Activated T-helper 1 cell treated with anti-CD3 and anti-CD28 coated beads, Interleukin-12 subunit alpha, Interleukin-12 subunit beta, Interleukin-2, Interleukin-4 antibody, amounts not matched to agents 30 ng/mL and 10 ng/mL and 1 ng/mL, durations not matched to agents 14 hours and 24 hours and 36 hours (primary cell): ENCODE measurements at regions of chr13 and their contacts with region 1.

Region 1: DNA sequence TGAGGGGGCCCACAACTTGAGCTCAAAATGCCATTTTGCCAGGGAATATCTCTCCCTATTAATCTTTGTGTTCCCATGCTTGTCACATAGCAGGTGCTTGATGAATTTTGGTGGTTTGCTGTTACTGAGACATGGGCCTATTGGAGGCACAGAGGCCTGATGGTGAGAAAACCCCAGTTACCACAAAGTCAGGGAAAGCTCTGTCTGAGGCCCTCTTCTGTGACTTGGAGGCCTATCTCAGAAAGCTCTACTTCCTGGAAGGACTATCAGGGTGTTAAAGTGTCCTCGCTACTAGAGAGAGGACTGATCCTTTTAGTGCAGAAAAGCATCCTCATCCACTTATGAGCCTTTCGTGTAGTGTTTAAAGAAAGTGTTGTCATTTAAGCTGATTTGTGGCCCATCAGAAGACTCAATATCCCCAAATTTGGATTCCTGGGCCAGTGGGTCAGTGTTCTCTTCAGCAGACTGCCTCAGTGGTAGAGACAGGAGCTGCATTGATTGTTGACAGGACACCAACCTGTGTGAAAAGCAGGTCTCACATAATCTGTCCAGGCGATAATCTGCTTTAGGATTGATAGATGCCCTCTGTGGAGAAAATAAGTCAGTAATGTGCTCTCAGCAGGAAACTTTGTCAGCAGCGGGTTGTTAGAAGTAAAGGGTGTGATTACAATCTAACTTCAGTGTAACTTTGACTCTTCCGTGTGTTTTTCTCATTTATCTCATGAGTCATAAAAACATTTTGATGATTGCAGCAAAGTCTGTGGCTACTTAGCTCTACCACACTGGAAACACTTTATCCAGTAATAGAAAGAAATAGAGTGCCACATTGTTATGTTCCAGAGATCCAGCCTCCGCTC is 121.0 kb downstream of the AKAP11 start:
- DNase-seq: peak; percentile 45
- H3K4me3 Mint-ChIP-seq: peak overlapping the region; percentile 89
- H3K27ac Mint-ChIP-seq: peak overlapping the region; percentile 100
- H3K4me1 Mint-ChIP-seq: peaks cover 79% of the 10 kb centered on the region
- H3K27me3 Mint-ChIP-seq: no peaks in the 10 kb centered on the region

Region 2: DNA sequence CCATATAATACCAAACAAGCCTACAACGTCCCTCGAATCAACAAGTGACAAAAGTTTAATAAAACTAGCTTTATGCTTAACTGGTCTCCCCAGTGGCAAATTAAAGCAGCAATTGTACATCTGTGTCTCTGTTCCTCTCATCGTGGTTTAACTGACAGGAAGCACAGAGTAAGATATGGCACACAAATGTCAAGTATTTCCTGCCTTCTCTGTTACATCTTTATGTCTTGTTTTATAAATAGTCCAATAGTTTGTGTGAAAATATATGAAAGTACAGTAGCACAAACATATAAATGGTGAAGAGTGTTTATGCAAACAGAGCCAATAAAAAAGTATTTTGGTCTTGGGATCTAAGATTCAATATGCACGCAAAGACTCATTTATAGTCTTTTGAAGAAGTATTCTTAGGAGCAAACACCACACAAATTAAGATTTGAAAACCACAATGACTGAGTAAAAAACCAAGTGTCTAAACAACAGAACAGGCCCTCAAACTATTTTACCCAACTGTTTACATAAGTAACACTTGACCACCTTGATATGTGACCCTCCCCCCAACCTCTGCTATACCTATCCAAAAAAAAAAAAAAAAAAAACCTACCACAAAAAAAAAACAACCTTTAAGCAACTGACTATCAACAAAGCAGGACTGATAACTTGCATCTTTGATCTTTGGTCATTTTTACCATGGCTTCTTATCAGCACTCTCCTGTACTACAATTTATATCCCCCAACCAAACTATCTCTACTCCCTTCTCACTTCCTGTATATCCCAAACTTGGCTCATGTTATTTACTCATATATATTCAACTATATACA is 1387.9 kb before region 1 on chr13:
- intact Hi-C with region 1: loop called (anchors 10 kb)
- DNase-seq: no peak
- H3K4me3 Mint-ChIP-seq: peak overlapping the region; percentile 59
- H3K27ac Mint-ChIP-seq: peak overlapping the region; percentile 88
- H3K4me1 Mint-ChIP-seq: peaks cover 66% of the 10 kb centered on the region
- H3K27me3 Mint-ChIP-seq: no peaks in the 10 kb centered on the region

Region 3: GRCh38 chr13:41916173-41916954 is 476.6 kb before region 1 on chr13:
- intact Hi-C with region 1: loop called (anchors 10 kb)
- DNase-seq: no peak
- H3K4me3 Mint-ChIP-seq: peak overlapping the region; percentile 79
- H3K27ac Mint-ChIP-seq: peak overlapping the region; percentile 96
- H3K4me1 Mint-ChIP-seq: peaks cover 58% of the 10 kb centered on the region
- H3K27me3 Mint-ChIP-seq: no peaks in the 10 kb centered on the region

Region 4: DNA sequence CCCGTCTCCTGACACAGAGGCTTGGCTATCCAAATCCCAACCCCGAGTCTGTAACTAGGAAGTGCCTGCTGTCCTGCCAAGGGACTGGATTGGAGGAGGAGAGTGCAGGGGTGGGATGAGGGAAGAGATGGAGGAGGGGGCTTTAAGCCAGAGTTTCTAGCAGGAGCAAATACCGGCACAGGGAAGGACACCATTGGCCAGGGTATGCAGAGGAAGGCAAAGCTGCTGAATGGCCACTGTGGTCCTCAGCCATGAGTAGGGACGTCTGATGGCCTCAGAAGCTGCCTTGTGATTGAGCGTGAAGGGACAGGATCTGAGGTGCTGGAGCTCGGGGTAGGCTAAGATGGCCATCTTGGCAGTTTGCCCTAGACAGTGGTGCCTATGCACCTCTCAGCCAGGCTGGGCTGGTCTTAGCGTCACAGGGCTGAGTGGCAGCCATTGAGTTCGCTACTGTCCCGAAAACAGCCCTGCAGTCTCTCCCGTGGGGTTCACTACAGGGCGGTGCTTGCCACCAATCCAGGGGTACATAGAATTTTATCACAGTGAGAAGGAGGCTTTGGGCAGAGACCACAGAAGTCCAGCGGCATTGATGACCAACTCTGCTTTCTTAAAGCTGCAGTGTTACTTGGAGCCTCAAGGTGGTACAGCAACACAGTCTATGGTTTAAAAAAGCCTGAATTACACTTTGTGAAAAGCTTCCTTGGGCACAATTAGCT is 59.2 kb before region 1 on chr13:
- intact Hi-C with region 1: loop called (anchors 1 kb)
- DNase-seq: no peak
- H3K4me3 Mint-ChIP-seq: no peak overlapping the region
- H3K27ac Mint-ChIP-seq: peak overlapping the region; percentile 6
- H3K4me1 Mint-ChIP-seq: peaks cover 51% of the 10 kb centered on the region
- H3K27me3 Mint-ChIP-seq: no peaks in the 10 kb centered on the region

Region 5: GRCh38 chr13:42377640-42378382 is 15.1 kb before region 1 on chr13:
- intact Hi-C with region 1: loop called (anchors 1 kb)
- DNase-seq: peak; percentile 68
- H3K4me3 Mint-ChIP-seq: peak overlapping the region; percentile 38
- H3K27ac Mint-ChIP-seq: peak overlapping the region; percentile 89
- H3K4me1 Mint-ChIP-seq: peaks cover 82% of the 10 kb centered on the region
- H3K27me3 Mint-ChIP-seq: no peaks in the 10 kb centered on the region

Region 6: DNA sequence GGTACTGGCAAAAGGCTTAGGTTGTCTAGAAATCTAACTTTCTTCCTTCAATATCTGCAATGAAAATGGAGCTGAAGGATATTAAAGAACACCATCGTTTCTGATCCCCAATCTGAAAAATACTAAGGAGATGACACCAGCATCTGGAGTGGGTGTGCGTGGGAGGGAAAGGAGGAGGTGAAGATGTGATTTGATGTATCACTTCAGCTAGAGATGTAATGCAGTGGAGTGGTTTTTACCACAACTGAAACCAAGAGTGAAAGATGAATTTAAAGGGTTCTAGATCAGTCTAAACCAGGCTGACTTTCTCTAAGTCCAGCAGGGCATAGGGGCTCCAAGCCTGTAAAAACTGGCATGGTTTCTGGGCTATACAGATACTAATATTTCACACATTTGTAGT is 27.4 kb after region 1 on chr13:
- intact Hi-C with region 1: loop called (anchors 1 kb)
- DNase-seq: no peak
- H3K4me3 Mint-ChIP-seq: peak overlapping the region; percentile 54
- H3K27ac Mint-ChIP-seq: peak overlapping the region; percentile 83
- H3K4me1 Mint-ChIP-seq: peaks cover 43% of the 10 kb centered on the region
- H3K27me3 Mint-ChIP-seq: peaks cover 2% of the 10 kb centered on the region

Region 7: GRCh38 chr13:42991892-42992763 is 599.2 kb after region 1 on chr13 and contains the start of gene EPSTI1:
- intact Hi-C with region 1: loop called (anchors 10 kb)
- DNase-seq: peak; percentile 80
- H3K4me3 Mint-ChIP-seq: peak within 1 kb of the TSS; percentile 95
- H3K27ac Mint-ChIP-seq: peak within 1 kb of the TSS; percentile 97
- H3K4me1 Mint-ChIP-seq: peaks cover 76% of the 10 kb centered on the region
- H3K27me3 Mint-ChIP-seq: no peaks in the 10 kb centered on the region
- total RNA-seq, gene EPSTI1: 18.6 and 19.3 TPM in 2 replicates